Naive thymus-derived CD4-positive, alpha-beta T cell (primary cell): ENCODE measurements at regions of chr19 and their contacts with region 1.

Region 1: DNA sequence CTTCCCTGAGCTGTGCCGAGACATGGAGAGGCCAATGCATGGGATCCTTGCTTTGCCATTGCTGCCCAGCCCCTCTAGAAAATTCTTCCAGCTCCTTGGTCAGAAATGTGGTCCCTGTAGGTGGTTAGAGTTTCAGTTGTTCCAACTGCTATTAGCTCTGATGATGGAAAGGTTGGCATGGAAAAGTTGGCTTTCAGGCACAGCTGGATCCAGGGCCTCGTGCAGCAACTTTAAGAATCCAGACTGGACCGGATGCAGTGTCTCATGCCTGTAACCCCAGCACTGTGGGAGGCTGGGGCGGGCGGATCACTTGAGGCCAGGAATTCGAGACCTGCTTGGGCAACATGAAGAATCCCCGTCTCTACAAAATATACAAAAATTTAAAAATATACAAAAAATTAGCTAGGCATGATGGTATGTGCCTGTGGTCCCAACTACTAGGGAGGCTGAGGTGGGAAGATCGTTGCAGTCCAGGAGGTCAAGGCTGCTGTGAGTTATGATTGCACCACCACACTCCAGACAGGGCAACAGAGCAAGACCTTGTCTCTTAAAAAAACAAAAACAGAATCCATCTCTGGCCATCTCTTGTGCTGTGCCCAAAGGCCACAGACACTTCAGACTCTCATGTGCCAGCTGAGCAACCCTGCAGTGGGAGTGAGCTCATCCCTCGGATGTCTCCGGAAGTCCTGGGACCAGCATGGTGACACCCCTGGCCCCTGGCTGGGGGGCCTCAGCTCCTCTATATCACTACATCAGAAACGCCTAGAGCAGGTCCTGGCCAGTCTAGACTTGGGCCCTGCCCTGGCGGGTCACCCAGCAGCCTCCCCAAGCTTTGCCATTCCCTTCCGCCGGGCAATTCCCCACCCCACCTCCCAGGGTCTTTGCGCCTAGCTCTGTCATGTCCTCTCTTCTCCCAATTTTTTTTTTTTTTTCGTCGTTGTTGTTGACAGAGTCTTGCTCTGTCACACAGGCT is 16.8 kb downstream of the MEX3D start:
- DNase-seq: no peak
- ATAC-seq: no peak
- H3K4me3 ChIP-seq: no peak overlapping the region
- H3K4me3 Mint-ChIP-seq: no peak overlapping the region
- H3K27ac ChIP-seq: no peak overlapping the region
- H3K27ac Mint-ChIP-seq: peak overlapping the region in 1 of 9 donors; percentile 25
- H3K4me1 ChIP-seq: peaks cover 0 to under 1% of the 10 kb centered on the region in 2 donors
- H3K4me1 Mint-ChIP-seq: peaks cover 0 to 2% (median under 1%) of the 10 kb centered on the region in 7 donors
- H3K27me3 ChIP-seq: no peaks in the 10 kb centered on the region
- H3K27me3 Mint-ChIP-seq: peaks cover 0 to 11% (median 5%) of the 10 kb centered on the region in 5 donors

Region 2: GRCh38 chr19:1590641-1591397 is 39.5 kb after region 1 on chr19:
- CTCF ChIA-PET with region 1: no interaction called
- POLR2A ChIA-PET with region 1: no interaction called
- intact Hi-C with region 1: no loop called
- DNase-seq: peak in 3 of 9 donors; percentile 24 to 36 (median 27)
- ATAC-seq: no peak
- H3K4me3 ChIP-seq: peak overlapping the region; percentile 75
- H3K4me3 Mint-ChIP-seq: peak overlapping the region; percentile 84 to 92 (median 88)
- H3K27ac ChIP-seq: peak overlapping the region; percentile 99
- H3K27ac Mint-ChIP-seq: peak overlapping the region; percentile 33 to 95 (median 91)
- H3K4me1 ChIP-seq: peaks cover 10 to 16% of the 10 kb centered on the region in 2 donors
- H3K4me1 Mint-ChIP-seq: peaks cover 11 to 26% (median 19%) of the 10 kb centered on the region in 7 donors
- H3K27me3 ChIP-seq: no peaks in the 10 kb centered on the region
- H3K27me3 Mint-ChIP-seq: no peaks in the 10 kb centered on the region

Region 3: DNA sequence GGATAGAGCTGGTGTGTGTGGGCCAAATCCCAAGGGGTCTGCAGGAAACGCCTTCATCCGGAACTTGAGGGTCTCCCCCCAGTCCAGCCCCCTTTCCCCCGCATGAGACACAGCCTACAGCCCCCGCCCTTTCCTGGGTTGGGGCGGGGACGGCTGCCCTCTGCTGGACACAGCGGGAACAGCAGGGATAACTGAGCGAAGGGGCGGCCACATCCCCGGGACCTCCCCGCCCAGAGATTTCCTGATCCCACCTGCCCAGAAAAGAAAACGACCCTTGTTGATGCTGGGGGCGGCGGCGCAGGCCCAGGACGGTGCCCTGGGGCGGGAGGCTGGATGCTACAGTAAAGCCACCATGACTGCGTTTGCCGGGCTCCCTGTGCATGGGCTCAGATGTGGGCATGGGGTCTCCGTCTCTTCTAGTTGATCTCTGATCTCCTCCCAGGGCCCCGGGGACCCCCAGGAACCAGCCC is 216.1 kb after region 1 on chr19:
- CTCF ChIA-PET with region 1: interaction called, 3 read pairs
- POLR2A ChIA-PET with region 1: no interaction called
- intact Hi-C with region 1: loop called (anchors 1 to 5 kb)
- DNase-seq: peak; percentile 26 to 77 (median 60)
- ATAC-seq: peak; percentile 89
- H3K4me3 ChIP-seq: no peak overlapping the region
- H3K4me3 Mint-ChIP-seq: no peak overlapping the region
- H3K27ac ChIP-seq: no peak overlapping the region
- H3K27ac Mint-ChIP-seq: no peak overlapping the region
- H3K4me1 ChIP-seq: no peaks in the 10 kb centered on the region
- H3K4me1 Mint-ChIP-seq: no peaks in the 10 kb centered on the region
- H3K27me3 ChIP-seq: peaks cover 13 to 16% of the 10 kb centered on the region in 2 donors
- H3K27me3 Mint-ChIP-seq: peaks cover 58 to 86% (median 66%) of the 10 kb centered on the region in 5 donors

Region 4: DNA sequence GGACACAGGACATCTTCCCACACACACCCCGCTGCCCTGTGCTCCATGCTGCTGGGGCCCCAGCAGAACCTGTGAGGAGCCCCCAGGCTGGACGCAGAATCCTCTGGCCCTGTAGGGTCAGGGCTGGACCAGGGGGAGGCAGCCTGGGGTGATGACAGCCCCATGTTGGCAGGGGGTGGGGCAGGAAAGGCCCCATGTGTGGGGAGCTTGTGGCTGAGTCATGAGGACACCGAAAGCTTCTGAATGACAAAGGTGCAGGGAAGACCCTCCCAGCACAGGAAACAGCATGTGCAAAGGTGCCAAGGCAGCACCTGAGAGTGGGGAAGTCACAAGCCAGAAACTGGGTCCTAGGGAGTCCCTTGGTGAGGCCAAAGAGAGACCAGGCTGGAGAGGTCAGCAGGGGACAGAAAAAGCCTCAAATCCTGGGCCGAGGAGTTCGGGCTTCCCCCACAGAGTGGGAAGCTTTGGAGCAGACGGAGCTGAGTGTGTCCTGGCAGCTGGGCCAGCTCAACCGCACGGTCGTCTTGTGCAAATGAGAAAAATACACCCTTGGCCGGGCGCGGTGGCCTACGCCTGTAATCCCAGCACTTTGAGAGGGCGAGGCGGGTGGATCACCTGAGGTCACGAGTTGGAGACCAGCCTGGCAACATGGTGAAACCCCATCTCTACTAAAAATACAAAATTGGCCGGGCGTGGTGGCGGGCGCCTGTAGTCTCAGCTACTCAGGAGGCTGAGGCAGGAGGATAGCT is 243.2 kb after region 1 on chr19:
- CTCF ChIA-PET with region 1: no interaction called
- POLR2A ChIA-PET with region 1: no interaction called
- intact Hi-C with region 1: loop called in 1 of 2 experiments (anchors 1 kb)
- DNase-seq: no peak
- ATAC-seq: no peak
- H3K4me3 ChIP-seq: no peak overlapping the region
- H3K4me3 Mint-ChIP-seq: peak overlapping the region in 1 of 10 donors; percentile 31
- H3K27ac ChIP-seq: no peak overlapping the region
- H3K27ac Mint-ChIP-seq: no peak overlapping the region
- H3K4me1 ChIP-seq: peaks cover 0 to 3% of the 10 kb centered on the region in 2 donors
- H3K4me1 Mint-ChIP-seq: peaks cover 0 to 4% (median 0%) of the 10 kb centered on the region in 7 donors
- H3K27me3 ChIP-seq: no peaks in the 10 kb centered on the region
- H3K27me3 Mint-ChIP-seq: peaks cover 5 to 10% (median 5%) of the 10 kb centered on the region in 5 donors